Activated CD4-positive, alpha-beta T cell treated with anti-CD3 and anti-CD28 coated beads, Interleukin-2, amount 10 ng/mL, durations not matched to agents 24 days and 14 days (primary cell): ENCODE measurements at regions of chr20 and their contacts with region 1.

Region 1: DNA sequence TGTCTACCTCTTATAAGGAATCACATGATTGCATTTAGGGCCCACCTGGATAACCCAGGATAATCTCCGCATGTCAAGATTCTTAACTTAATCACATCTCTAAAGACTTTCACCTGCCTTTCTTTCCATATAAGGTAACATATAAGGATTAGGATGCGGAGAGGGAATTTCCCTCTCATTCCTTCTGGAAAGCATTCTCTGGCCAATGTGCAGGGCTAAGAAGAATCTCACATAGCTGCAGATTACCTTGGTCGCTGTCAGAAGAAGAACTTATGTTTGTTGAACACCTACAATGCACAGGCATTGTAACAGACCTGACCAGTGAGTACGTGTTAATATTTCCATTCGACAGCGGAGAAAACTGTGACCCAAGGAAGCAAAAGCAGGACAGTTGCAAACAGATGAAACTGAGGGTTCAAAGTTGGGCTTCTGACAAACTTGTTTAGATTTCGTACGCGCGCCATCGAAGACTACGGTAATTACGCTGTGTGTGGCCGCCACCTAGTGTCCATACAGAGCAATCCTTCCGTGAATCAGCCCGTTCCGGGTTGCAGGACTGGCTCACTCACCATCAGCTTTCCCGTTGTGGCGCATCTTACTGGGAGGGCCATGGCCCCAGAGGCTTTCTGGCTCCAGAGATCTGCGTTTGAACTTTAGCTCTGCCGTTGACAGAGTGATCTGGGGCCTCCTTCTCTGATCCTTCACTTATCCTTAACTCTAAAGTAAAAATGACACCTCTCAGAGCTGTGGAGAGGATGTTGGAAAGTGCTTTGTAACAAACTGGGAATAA is 9.5 kb downstream of the C20orf202 start:
- DNase-seq: peak; percentile 91
- H3K4me3 Mint-ChIP-seq: no peak overlapping the region
- H3K27ac Mint-ChIP-seq: no peak overlapping the region
- H3K4me1 Mint-ChIP-seq: peaks cover 31% of the 10 kb centered on the region
- H3K27me3 Mint-ChIP-seq: peaks cover 21% of the 10 kb centered on the region

Region 2: GRCh38 chr20:815914-816606 is 396.7 kb before region 1 on chr20:
- intact Hi-C with region 1: loop called (anchors 5 kb)
- DNase-seq: peak; percentile 89
- H3K4me3 Mint-ChIP-seq: no peak overlapping the region
- H3K27ac Mint-ChIP-seq: no peak overlapping the region
- H3K4me1 Mint-ChIP-seq: peaks cover 2% of the 10 kb centered on the region
- H3K27me3 Mint-ChIP-seq: peaks cover 1% of the 10 kb centered on the region

Region 3: DNA sequence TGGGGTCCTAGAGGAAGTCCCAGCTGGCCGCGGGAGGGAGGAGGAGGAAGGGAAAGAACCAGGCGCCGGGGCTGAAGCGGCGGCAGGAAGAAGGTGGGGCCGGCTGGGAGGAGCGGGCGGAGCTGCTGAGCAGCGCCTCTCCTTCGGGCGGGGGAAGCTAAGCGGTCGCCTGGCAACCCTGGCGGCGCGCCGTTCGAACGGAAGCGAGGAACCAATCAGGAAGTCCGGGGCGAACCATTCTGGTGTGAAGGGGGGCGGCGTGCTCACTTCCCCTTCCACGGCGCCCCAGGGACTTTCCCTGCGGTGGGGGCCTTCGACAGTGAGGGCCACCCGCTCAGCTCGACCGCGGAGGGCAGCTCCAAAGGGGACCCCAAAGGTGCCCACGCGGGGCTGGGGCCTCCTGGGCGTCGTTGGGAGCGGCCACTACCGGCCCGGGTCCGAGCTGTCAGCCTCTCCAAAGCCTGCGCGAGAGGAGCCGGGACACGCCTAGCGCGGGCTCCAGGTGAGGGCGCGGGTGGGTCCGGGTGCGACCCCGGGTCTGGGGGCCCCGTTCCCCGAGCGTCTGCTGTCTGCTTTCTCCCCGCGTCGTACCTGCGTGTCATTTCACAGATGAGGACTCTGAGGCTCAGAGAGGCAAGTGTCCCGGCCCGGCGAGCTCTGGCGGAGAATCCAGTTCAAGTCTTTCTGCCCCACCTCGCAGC is 379.2 kb before region 1 on chr20 and contains the start of gene FAM110A:
- intact Hi-C with region 1: loop called (anchors 5 kb)
- DNase-seq: peak; percentile 99
- H3K4me3 Mint-ChIP-seq: peak within 1 kb of the TSS; percentile 84
- H3K27ac Mint-ChIP-seq: peak within 1 kb of the TSS; percentile 85
- H3K4me1 Mint-ChIP-seq: peaks cover 43% of the 10 kb centered on the region
- H3K27me3 Mint-ChIP-seq: no peaks in the 10 kb centered on the region
- total RNA-seq, gene FAM110A: 13.3 and 15.4 TPM in 2 replicates

Region 4: GRCh38 chr20:973785-974194 is 239.0 kb before region 1 on chr20:
- intact Hi-C with region 1: loop called (anchors 10 kb)
- DNase-seq: peak; percentile 81
- H3K4me3 Mint-ChIP-seq: no peak overlapping the region
- H3K27ac Mint-ChIP-seq: no peak overlapping the region
- H3K4me1 Mint-ChIP-seq: peaks cover 2% of the 10 kb centered on the region
- H3K27me3 Mint-ChIP-seq: peaks cover 3% of the 10 kb centered on the region

Region 5: GRCh38 chr20:1108437-1108920 is 104.3 kb before region 1 on chr20:
- intact Hi-C with region 1: loop called (anchors 2 kb)
- DNase-seq: peak; percentile 83
- H3K4me3 Mint-ChIP-seq: no peak overlapping the region
- H3K27ac Mint-ChIP-seq: no peak overlapping the region
- H3K4me1 Mint-ChIP-seq: no peaks in the 10 kb centered on the region
- H3K27me3 Mint-ChIP-seq: peaks cover 4% of the 10 kb centered on the region

Region 6: DNA sequence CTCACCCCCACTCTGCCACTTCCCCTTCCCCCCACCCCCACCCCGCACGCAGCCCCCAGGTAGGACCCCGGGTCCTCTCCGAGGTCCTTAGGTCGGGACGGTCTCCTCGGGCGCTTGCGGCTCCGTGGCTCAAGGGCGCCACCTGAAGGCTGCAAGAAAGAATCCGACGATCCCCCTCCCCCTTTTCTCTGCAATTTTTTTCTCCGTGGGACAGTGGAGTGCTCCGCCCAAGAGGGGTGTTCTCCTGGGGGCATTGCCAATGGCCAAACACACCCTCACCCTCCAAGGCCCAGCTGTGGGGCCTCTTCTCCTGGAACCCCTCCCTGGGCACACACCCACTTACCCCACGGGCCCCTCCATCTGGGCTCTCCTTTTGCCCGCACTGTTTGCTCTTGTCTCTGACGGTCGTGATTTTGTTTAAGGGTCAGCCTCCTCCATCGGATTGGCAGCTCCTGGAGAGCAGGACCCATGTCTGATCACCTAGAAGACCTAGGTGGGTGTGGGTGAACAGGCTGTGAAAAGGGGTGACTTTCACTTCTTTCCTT is 26.9 kb before region 1 on chr20:
- intact Hi-C with region 1: loop called (anchors 2 kb)
- DNase-seq: peak; percentile 87
- H3K4me3 Mint-ChIP-seq: peak overlapping the region; percentile 78
- H3K27ac Mint-ChIP-seq: no peak overlapping the region
- H3K4me1 Mint-ChIP-seq: peaks cover 10% of the 10 kb centered on the region
- H3K27me3 Mint-ChIP-seq: peaks cover 47% of the 10 kb centered on the region

Region 7: GRCh38 chr20:1225783-1226654 is 13.2 kb after region 1 on chr20 and contains the start of gene RAD21L1:
- intact Hi-C with region 1: no loop called
- DNase-seq: peak; percentile 88
- H3K4me3 Mint-ChIP-seq: peak within 1 kb of the TSS; percentile 86
- H3K27ac Mint-ChIP-seq: peak within 1 kb of the TSS; percentile 11
- H3K4me1 Mint-ChIP-seq: peaks cover 16% of the 10 kb centered on the region
- H3K27me3 Mint-ChIP-seq: peaks cover 50% of the 10 kb centered on the region
- total RNA-seq, gene RAD21L1: not detected in 2 replicates